OCI-LY7 (cell line): ENCODE measurements at regions of chr7 and their contacts with region 1.

Region 1: DNA sequence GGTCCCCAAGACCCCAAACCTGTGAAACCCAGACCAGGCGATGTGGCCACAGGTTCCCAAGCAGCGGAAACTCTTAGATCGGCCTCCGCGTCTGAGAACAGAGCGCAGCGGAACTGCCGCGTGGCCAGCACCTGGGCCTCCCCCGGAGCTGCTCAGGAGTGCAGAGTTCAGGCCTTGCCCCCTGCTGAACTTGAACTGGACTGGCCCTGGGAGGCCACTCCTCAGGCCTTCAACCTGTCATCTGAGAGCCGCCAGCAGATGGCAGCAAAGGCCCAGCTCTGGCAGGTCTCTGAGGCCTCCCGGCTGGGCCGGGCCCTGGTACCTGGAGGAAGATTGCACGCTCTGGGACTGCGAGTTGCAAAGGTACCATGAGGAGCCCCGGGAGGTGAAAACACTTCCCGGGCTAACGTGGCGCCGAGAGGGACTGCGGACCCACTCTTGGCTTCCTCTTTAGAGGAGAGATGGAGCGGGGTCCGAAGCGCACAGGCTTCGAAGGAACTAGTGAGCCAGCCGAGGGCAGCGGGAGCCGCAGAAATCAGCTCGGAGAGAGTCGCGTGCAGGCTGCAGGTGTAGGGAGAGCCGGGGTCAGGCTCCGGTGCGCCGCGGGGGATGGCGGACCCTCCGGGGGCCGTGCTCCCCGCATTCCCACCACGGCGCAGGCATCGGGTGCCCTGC is 89.1 kb downstream of the PAXIP1 start:
- DNase-seq: peak; percentile 67
- H3K4me3 ChIP-seq: no peak overlapping the region
- H3K27ac ChIP-seq: no peak overlapping the region
- H3K4me1 ChIP-seq: no peaks in the 10 kb centered on the region
- CTCF ChIP-seq: peak; percentile 85

Region 2: GRCh38 chr7:154968336-154969001 is 54.7 kb after region 1 on chr7:
- CTCF ChIA-PET with region 1: no interaction called
- POLR2A ChIA-PET with region 1: no interaction called
- intact Hi-C with region 1: no loop called
- DNase-seq: no peak
- H3K4me3 ChIP-seq: no peak overlapping the region
- H3K27ac ChIP-seq: no peak overlapping the region
- H3K4me1 ChIP-seq: no peaks in the 10 kb centered on the region
- CTCF ChIP-seq: no peak

Region 3: GRCh38 chr7:155344600-155345433 is 431.0 kb after region 1 on chr7:
- CTCF ChIA-PET with region 1: no interaction called
- POLR2A ChIA-PET with region 1: no interaction called
- intact Hi-C with region 1: loop called (anchors 1 kb)
- DNase-seq: peak; percentile 69
- H3K4me3 ChIP-seq: peak overlapping the region; percentile 69
- H3K27ac ChIP-seq: no peak overlapping the region
- H3K4me1 ChIP-seq: no peaks in the 10 kb centered on the region
- CTCF ChIP-seq: peak; percentile 85